ENCODE measurements at regions of chr17 and their contacts with region 1.

Region 1: DNA sequence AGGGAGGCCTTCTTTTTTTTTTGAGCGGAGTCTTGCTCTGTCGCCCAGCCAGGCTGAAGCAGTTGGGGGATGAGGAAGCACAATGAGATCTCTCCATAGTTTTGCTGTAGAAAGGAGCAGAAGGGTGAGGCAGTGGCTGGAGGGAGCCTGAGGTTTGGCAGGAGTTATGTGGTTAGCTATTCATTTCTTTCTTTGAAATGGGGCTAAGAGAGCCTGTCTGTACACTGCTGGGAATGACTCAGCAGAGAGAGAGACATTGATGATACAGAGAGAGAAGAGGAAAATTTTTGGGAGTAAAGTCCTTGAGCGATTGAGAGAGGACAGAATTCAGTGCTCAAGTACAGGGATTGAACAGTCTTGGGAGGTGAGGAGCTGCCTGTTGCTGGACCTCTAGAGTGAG is 22.1 kb downstream of the NOS2 start:
- DNase-seq: no peak
- H3K4me3 ChIP-seq: no peak overlapping the region
- H3K27ac ChIP-seq: no peak overlapping the region
- H3K4me1 ChIP-seq: peaks cover 0 to 6% (median 4%) of the 10 kb centered on the region in 4 experiments; a peak in 6 of 7 replicates
- H3K27me3 ChIP-seq: no peaks in the 10 kb centered on the region
- CTCF ChIP-seq: no peak
- EP300 ChIP-seq: no peak
- POLR2A ChIP-seq: no peak
- RAD21 ChIP-seq: no peak

Region 2: GRCh38 chr17:27793168-27793905 is 15.1 kb after region 1 on chr17:
- CTCF ChIA-PET with region 1: interaction called, 11 read pairs
- POLR2A ChIA-PET with region 1: interaction called, 3 read pairs
- DNase-seq: peak in 1 of 2 experiments; percentile 67
- H3K4me3 ChIP-seq: peak overlapping the region; percentile 36 to 60 (median 41)
- H3K27ac ChIP-seq: no peak overlapping the region
- H3K4me1 ChIP-seq: peaks cover 0 to 3% (median 1%) of the 10 kb centered on the region in 4 experiments; a peak in 3 of 7 replicates
- H3K27me3 ChIP-seq: peaks cover 0 to 24% (median 19%) of the 10 kb centered on the region in 4 experiments; a peak in 6 of 7 replicates
- CTCF ChIP-seq: no peak
- EP300 ChIP-seq: no peak
- POLR2A ChIP-seq: no peak
- RAD21 ChIP-seq: no peak

Region 3: GRCh38 chr17:27824745-27825144 is 46.6 kb after region 1 on chr17:
- CTCF ChIA-PET with region 1: no interaction called
- POLR2A ChIA-PET with region 1: no interaction called
- DNase-seq: no peak
- H3K4me3 ChIP-seq: no peak overlapping the region
- H3K27ac ChIP-seq: no peak overlapping the region
- H3K4me1 ChIP-seq: peaks cover 0 to under 1% (median 0%) of the 10 kb centered on the region in 4 experiments; a peak in 1 of 7 replicates
- H3K27me3 ChIP-seq: no peaks in the 10 kb centered on the region
- CTCF ChIP-seq: no peak
- EP300 ChIP-seq: no peak
- POLR2A ChIP-seq: no peak
- RAD21 ChIP-seq: no peak

Measured in H1 (cell line).